Activated naive CD4-positive, alpha-beta T cell treated with anti-CD3 and anti-CD28 coated beads for 36 hours (primary cell): ENCODE measurements at regions of chr11 and their contacts with region 1.

Region 1: DNA sequence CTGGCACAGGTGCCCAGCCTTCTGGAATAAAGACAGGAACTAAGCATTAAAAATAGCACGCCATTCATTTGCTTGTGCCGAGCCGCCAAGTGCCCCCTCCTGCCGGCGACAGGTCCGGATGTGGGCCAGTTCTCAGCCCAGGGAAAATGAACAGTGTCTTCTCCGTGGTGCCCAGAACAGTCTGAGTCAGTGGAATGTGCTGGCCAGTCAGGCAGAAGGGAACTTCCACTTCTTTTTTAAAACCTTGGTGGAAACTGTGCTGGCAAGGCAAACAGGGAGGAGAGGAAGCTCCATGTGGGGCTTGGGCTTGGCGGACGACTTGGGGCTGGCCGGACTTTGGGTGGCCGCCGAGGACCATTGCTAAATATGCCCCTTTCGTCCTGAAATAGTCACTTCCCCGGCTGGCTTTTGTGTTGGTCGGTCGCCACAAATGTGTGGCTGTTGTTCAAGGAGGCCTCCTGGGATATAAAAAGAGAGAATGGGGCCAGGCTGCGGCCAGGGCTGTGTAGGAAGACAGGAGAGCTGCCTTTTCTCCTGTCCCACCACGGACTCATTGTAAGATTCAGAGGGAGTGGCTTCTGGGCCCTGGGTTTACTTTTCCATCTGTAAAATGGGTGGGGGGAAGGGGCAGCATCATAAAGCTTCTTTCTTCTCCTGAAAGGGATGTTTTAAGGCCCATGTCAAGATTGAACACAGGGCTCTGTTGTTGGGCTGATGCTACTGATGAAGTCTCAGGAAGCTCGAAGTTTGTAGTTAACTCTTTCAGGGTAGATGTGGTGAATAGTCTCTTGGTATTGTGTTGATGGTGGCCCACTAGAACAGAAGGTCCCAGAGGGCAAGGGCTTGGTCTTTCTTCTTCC is 101.0 kb downstream of the PTPRJ start:
- DNase-seq: peak; percentile 66
- H3K4me3 Mint-ChIP-seq: peak overlapping the region; percentile 8
- H3K27ac Mint-ChIP-seq: no peak overlapping the region
- H3K4me1 Mint-ChIP-seq: peaks cover 33% of the 10 kb centered on the region
- H3K27me3 Mint-ChIP-seq: no peaks in the 10 kb centered on the region

Region 2: DNA sequence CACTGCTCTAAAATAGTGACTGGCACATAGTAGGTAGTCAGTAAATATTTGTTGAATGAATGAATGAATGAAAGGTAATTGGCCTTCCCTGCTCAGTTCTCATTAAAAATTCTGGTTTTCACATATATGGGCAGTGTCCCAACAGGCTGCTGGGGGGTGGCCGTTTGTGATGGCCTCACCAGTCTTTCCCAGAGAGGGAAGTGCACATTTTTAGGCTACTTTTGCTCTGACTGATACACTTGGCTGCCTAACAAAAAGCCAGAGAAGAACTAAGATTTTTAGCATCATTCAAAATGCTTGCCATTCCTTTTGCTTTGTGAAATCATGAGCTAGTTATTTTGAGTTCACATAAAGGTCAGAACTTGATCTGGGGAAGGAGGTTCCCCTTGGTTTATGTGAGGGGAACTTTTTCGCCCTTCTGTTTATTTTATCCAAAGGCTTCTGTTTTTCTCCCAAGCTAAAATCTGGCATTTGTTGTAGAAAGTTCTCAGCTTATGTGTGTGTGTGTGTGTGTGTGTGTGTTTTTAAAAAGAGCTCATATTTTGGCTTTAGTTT is 17.9 kb before region 1 on chr11:
- CTCF ChIA-PET with region 1: no interaction called
- intact Hi-C with region 1: loop called (anchors 2 kb)
- DNase-seq: no peak
- H3K4me3 Mint-ChIP-seq: no peak overlapping the region
- H3K27ac Mint-ChIP-seq: no peak overlapping the region
- H3K4me1 Mint-ChIP-seq: peaks cover 55% of the 10 kb centered on the region
- H3K27me3 Mint-ChIP-seq: no peaks in the 10 kb centered on the region

Region 3: GRCh38 chr11:48129697-48130395 is 48.5 kb after region 1 on chr11:
- CTCF ChIA-PET with region 1: no interaction called
- intact Hi-C with region 1: no loop called
- DNase-seq: no peak
- H3K4me3 Mint-ChIP-seq: no peak overlapping the region
- H3K27ac Mint-ChIP-seq: no peak overlapping the region
- H3K4me1 Mint-ChIP-seq: no peaks in the 10 kb centered on the region
- H3K27me3 Mint-ChIP-seq: no peaks in the 10 kb centered on the region